ENCODE measurements at regions of chr1 and their contacts with region 1.

Region 1: GRCh38 chr1:27603681-27604578 is at the start of gene AHDC1:
- DNase-seq: peak; percentile 33
- H3K4me3 ChIP-seq: peak within 1 kb of the TSS; percentile 87
- CTCF ChIP-seq: no peak

Region 2: GRCh38 chr1:27357281-27358037 is 246.5 kb before region 1 on chr1:
- CTCF ChIA-PET with region 1: interaction called, 53 read pairs
- POLR2A ChIA-PET with region 1: no interaction called
- DNase-seq: no peak
- H3K4me3 ChIP-seq: no peak overlapping the region
- CTCF ChIP-seq: peak; percentile 92

Region 3: GRCh38 chr1:27402349-27402754 is 201.6 kb before region 1 on chr1:
- CTCF ChIA-PET with region 1: interaction called, 260 read pairs
- POLR2A ChIA-PET with region 1: interaction called, 3 read pairs
- DNase-seq: no peak
- H3K4me3 ChIP-seq: no peak overlapping the region
- CTCF ChIP-seq: peak; percentile 81

Region 4: GRCh38 chr1:27525296-27526272 is 78.3 kb before region 1 on chr1:
- CTCF ChIA-PET with region 1: interaction called, 24 read pairs
- POLR2A ChIA-PET with region 1: no interaction called
- DNase-seq: no peak
- H3K4me3 ChIP-seq: peak overlapping the region; percentile 13; the same call in 1 of the 2 replicates
- CTCF ChIP-seq: no peak

Region 5: GRCh38 chr1:27589841-27590426 is 14.0 kb before region 1 on chr1:
- CTCF ChIA-PET with region 1: interaction called, 17 read pairs
- POLR2A ChIA-PET with region 1: interaction called, 3 read pairs
- DNase-seq: no peak
- H3K4me3 ChIP-seq: no peak overlapping the region
- CTCF ChIP-seq: no peak

Region 6: GRCh38 chr1:27671964-27672749 is 68.2 kb after region 1 on chr1 and contains the start of gene IFI6:
- CTCF ChIA-PET with region 1: interaction called, 687 read pairs
- POLR2A ChIA-PET with region 1: interaction called, 3 read pairs
- DNase-seq: peak; percentile 82
- H3K4me3 ChIP-seq: peak within 1 kb of the TSS; percentile 61
- CTCF ChIP-seq: peak; percentile 32